Common myeloid progenitor, CD34-positive (primary cell): ENCODE measurements at regions of chr10 and their contacts with region 1.

Region 1: DNA sequence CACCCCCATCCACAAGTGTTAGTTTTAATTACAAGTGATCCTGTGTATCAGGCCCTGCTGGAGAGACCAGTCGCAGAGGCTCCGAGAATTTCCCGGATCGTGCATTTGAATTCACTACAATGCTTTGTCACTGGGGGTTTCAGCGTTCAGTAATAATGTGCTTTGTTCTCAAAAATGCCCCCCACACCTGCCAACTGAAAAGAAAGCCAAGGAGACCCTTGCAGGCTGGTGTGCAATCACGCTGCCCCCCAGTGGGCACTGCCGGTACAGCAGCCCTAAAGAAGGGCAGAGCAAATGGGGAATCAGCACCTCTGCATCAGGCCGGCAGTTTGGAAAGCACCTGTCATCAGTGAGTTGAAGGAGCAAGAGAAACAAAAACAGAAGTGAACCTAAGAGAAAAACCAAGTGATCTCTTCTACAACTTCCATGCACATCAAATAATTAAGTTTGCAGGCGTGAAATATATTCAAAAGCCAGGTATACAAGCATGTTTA is 177.6 kb downstream of the PARD3 start:
- DNase-seq: peak; percentile 51 to 90 (median 89)
- H3K4me3 ChIP-seq: peak overlapping the region in 2 of 7 experiments; percentile 12 to 57
- H3K27ac ChIP-seq: no peak overlapping the region
- H3K4me1 ChIP-seq: peaks cover 0 to 16% (median 7%) of the 10 kb centered on the region in 4 experiments
- H3K27me3 ChIP-seq: no peaks in the 10 kb centered on the region

Region 2: DNA sequence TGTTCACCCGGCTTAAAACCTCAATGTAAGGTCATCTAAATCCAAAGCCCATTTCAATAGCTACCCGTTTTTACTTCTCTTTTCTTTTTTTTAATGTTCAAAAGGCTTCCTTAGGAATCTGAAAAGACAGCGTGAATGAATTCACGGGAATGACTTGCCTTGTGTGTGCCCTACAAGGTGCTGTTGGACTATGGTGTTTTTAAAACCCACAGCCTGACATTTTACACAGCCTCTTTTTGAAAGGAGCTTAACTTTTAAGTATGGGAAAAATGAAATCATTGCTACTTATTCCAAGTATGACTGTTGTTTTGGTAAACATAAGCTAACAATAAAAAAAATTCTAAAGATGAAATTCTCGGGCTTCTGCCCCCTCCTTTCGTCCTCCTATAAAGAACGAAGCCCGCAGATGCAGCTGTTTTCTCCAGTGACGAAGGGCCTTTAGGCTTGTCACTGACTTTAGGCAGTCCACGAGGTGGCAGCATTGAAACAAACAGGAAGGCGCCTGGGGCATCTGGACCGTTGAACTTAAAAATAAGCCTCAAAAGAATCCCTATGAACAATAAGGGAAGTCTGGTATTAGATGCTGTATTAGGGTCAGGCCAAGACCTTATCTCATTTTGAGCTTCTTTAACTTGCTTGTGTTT is 1444.3 kb before region 1 on chr10:
- CTCF ChIA-PET with region 1: interaction called, 23 read pairs
- POLR2A ChIA-PET with region 1: no interaction called
- DNase-seq: peak; percentile 79 to 92 (median 92)
- H3K4me3 ChIP-seq: no peak overlapping the region
- H3K27ac ChIP-seq: no peak overlapping the region
- H3K4me1 ChIP-seq: peaks cover 0 to 6% (median under 1%) of the 10 kb centered on the region in 4 experiments
- H3K27me3 ChIP-seq: peaks cover 0 to 11% (median 7%) of the 10 kb centered on the region in 5 experiments

Region 3: GRCh38 chr10:34606890-34607289 is 30.6 kb before region 1 on chr10:
- CTCF ChIA-PET with region 1: no interaction called
- POLR2A ChIA-PET with region 1: no interaction called
- DNase-seq: no peak
- H3K4me3 ChIP-seq: no peak overlapping the region
- H3K27ac ChIP-seq: no peak overlapping the region
- H3K4me1 ChIP-seq: no peaks in the 10 kb centered on the region
- H3K27me3 ChIP-seq: no peaks in the 10 kb centered on the region

Region 4: GRCh38 chr10:34655286-34656170 is 18.1 kb after region 1 on chr10:
- CTCF ChIA-PET with region 1: interaction called, 19 read pairs
- POLR2A ChIA-PET with region 1: no interaction called
- DNase-seq: peak; percentile 61 to 77 (median 70)
- H3K4me3 ChIP-seq: no peak overlapping the region
- H3K27ac ChIP-seq: no peak overlapping the region
- H3K4me1 ChIP-seq: peaks cover 0 to 4% (median 2%) of the 10 kb centered on the region in 4 experiments
- H3K27me3 ChIP-seq: peaks cover 0 to 4% (median 0%) of the 10 kb centered on the region in 5 experiments

Region 5: GRCh38 chr10:34768261-34768971 is 131.0 kb after region 1 on chr10:
- CTCF ChIA-PET with region 1: no interaction called
- POLR2A ChIA-PET with region 1: no interaction called
- DNase-seq: no peak
- H3K4me3 ChIP-seq: no peak overlapping the region
- H3K27ac ChIP-seq: no peak overlapping the region
- H3K4me1 ChIP-seq: peaks cover 0 to 2% (median 0%) of the 10 kb centered on the region in 4 experiments
- H3K27me3 ChIP-seq: peaks cover 0 to 3% (median 0%) of the 10 kb centered on the region in 5 experiments